Aorta (tissue), 5 donors: ENCODE measurements at regions of chr2 and their contacts with region 1.

Region 1: GRCh38 chr2:97812931-97813330 is 99.6 kb downstream of the ZAP70 start:
- DNase-seq: no peak
- ATAC-seq: no peak
- H3K4me3 ChIP-seq: no peak overlapping the region
- H3K27ac ChIP-seq: no peak overlapping the region
- H3K4me1 ChIP-seq: no peaks in the 10 kb centered on the region
- H3K27me3 ChIP-seq: no peaks in the 10 kb centered on the region

Region 2: DNA sequence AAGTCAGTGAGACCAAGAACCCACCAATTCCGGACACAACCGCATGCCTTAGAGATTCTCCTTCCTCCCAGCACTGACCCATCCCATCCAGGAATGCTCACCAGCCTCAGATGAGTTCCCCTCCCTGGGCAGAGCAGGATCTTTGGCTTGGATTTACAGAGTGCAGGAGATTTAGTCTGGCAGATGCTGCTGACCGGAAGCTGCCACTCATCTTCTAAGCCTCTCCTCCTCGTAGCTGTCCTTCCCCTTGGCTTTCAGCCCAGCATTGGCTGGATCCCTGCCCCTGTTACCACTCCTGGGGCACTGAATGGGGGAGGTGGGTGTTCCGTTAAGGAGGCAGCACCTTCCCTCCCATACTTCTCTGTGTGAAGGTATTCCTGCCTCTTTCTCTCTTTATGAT is 327.3 kb after region 1 on chr2:
- intact Hi-C with region 1: loop called in 1 of 2 experiments (anchors 5 kb)
- DNase-seq: no peak
- ATAC-seq: no peak
- H3K4me3 ChIP-seq: no peak overlapping the region
- H3K27ac ChIP-seq: no peak overlapping the region
- H3K4me1 ChIP-seq: no peaks in the 10 kb centered on the region
- H3K27me3 ChIP-seq: no peaks in the 10 kb centered on the region